Tibial artery (tissue), 4 donors: ENCODE measurements at regions of chr17 and their contacts with region 1.

Region 1: GRCh38 chr17:75034236-75034908 is 12.4 kb downstream of the ATP5PD start:
- DNase-seq: peak; percentile 89 to 93
- H3K4me3 ChIP-seq: peak overlapping the region; percentile 71 to 96
- H3K27ac ChIP-seq: peak overlapping the region; percentile 95 to 97
- H3K4me1 ChIP-seq: peaks cover 0 to 30% (median 22%) of the 10 kb centered on the region in 4 donors
- H3K27me3 ChIP-seq: no peaks in the 10 kb centered on the region
- CTCF ChIP-seq: peak in 1 of 2 experiments; percentile 6

Region 2: DNA sequence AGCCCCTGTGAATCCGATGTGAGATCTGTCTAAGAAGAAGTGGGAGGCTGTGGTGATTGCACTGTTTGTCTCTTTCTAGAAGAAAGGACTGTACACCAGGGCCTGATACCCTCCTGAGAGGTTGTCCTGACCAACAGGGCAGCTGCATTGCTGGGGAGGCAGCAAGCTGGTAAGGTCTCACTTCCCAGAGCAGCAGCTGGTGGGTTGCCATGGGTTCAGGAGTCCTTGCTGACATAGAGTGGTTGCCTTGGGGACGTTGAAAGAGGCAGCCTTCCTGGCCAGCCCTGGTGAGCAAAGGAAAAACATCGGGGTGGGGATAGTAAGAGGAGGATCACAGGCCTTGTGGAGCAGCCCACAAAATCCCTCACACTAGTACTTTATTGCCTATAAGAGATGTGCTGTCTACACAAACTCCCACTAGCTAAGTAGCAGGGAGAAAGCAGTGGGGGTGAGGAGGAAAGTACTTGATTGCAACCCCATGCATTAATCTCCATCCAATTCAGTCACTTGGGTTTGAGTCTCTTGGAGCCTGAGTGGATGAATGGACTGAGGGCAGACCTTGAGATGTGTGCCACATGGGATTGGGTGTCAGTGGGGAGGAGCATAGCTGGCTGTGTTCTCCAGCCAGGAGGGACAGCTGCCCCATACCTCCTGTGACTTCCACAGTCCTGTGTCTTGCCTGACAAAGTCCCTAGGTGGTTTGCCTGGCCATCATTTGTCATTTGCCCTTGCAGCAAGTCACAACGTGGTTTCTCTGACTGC is 974.7 kb before region 1 on chr17:
- intact Hi-C with region 1: no loop called
- DNase-seq: no peak
- H3K4me3 ChIP-seq: no peak overlapping the region
- H3K27ac ChIP-seq: no peak overlapping the region
- H3K4me1 ChIP-seq: no peaks in the 10 kb centered on the region
- H3K27me3 ChIP-seq: peaks cover 0 to 28% of the 10 kb centered on the region in 2 donors
- CTCF ChIP-seq: no peak

Region 3: DNA sequence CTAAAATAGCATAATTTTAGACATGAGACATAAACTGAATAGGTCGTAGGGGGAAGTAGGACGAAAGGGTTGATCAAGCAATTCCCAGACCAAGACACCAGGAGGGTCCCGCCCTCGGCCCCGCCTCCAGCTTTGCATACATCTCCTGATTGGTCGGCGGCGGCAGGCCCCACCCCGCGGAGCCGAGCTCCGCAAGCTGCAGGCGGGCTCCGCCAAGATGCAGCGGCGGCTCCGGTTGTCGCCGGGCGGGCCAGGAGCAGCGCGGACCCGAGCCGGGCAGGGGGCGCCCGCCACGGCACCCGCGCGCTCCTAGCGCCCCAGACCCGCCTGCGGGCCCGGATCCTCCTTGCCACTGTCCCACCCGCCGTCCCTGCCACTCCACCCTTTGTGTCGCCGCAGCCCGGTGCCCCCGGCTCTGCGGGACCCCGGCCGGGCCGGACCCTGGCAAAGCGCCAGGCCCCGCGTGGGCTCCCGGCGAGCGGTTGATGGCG is 46.9 kb before region 1 on chr17 and contains the start of gene CDR2L:
- intact Hi-C with region 1: loop called (anchors 5 kb)
- DNase-seq: peak; percentile 98 to 99
- H3K4me3 ChIP-seq: peak within 1 kb of the TSS; percentile 65 to 97
- H3K27ac ChIP-seq: peak within 1 kb of the TSS; percentile 93 to 95
- H3K4me1 ChIP-seq: peaks cover 0 to 32% (median 23%) of the 10 kb centered on the region in 4 donors
- H3K27me3 ChIP-seq: no peaks in the 10 kb centered on the region
- CTCF ChIP-seq: peak in 1 of 2 experiments; percentile 2

Region 4: DNA sequence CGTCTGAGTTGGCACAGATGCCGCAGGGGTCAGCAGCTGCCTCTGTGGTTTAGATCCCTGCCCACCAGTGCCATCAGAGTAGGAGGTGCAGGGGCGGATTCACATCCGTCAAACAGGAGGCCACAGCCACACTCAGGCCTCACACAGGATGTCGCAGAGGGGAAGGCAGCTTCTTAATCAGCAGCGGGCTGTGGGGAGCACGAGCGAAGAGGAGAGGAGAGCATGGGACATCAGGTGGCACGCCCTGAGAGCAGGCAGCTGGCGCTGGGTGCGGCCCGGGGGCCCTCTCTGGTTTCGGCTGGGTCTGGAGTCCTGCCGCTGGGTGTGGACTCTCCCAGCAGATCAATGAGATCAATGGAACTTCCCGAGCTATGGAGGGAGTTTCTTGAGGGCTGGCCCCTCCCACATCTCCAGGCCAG is 500.8 kb after region 1 on chr17:
- intact Hi-C with region 1: no loop called
- DNase-seq: no peak
- H3K4me3 ChIP-seq: no peak overlapping the region
- H3K27ac ChIP-seq: no peak overlapping the region
- H3K4me1 ChIP-seq: no peaks in the 10 kb centered on the region
- H3K27me3 ChIP-seq: no peaks in the 10 kb centered on the region
- CTCF ChIP-seq: no peak